Naive thymus-derived CD4-positive, alpha-beta T cell (primary cell): ENCODE measurements at regions of chr17 and their contacts with region 1.

Region 1: DNA sequence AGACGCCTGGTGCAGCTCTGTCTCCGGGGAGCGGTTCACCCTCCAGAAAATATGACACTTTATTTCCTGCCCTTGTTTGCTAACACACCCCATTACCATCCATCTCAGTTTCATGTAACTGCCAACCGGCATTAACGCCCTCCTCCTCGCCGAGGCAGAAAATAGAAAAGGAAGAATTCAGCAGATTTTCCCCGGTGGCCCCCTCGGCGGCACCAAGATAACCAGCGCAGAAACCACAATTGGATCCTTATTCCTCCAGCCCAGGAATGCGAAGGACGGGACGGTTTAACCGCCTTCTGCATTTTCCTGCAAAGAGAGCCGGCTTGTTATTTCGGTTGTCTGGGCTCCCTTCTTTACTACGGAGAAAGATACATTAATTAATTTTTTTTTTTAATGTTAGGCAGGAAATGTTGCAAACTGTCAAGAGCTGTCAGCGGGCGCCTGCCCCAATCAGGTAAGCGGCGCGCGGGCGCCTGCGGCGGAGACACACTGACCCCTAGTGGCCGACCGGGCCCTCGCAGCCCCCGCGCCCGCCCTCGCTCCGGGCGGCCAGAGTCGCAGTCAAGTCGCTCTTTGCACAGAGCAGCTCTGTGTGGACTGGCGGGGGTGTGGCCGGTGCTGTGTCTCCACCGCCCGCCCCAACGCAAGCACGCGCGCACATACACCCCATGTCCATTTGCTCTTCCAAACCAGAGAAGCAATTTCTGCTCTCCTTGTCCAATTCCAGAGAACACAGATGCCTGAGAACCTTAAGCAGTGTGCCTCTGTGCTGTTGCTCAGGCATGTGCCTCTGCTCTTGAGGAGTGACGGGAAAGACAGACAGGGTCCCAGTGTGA is 53.6 kb downstream of the C17orf67 start:
- DNase-seq: peak; percentile 81 to 92 (median 88)
- ATAC-seq: peak; percentile 99
- H3K4me3 ChIP-seq: peak overlapping the region; percentile 62
- H3K4me3 Mint-ChIP-seq: peak overlapping the region; percentile 87 to 99 (median 92)
- H3K27ac ChIP-seq: peak overlapping the region; percentile 82
- H3K27ac Mint-ChIP-seq: peak overlapping the region; percentile 92 to 100 (median 96)
- H3K4me1 ChIP-seq: peaks cover 0 to 18% of the 10 kb centered on the region in 2 donors
- H3K4me1 Mint-ChIP-seq: peaks cover 19 to 37% (median 31%) of the 10 kb centered on the region in 7 donors
- H3K27me3 ChIP-seq: no peaks in the 10 kb centered on the region
- H3K27me3 Mint-ChIP-seq: peaks cover 0 to 5% (median 0%) of the 10 kb centered on the region in 5 donors

Region 2: GRCh38 chr17:56125830-56126819 is 654.0 kb before region 1 on chr17:
- CTCF ChIA-PET with region 1: interaction called, 5 read pairs
- POLR2A ChIA-PET with region 1: no interaction called
- intact Hi-C with region 1: loop called (anchors 2 to 5 kb)
- DNase-seq: peak in 3 of 9 donors; percentile 6 to 19 (median 7)
- ATAC-seq: no peak
- H3K4me3 ChIP-seq: no peak overlapping the region
- H3K4me3 Mint-ChIP-seq: no peak overlapping the region
- H3K27ac ChIP-seq: no peak overlapping the region
- H3K27ac Mint-ChIP-seq: no peak overlapping the region
- H3K4me1 ChIP-seq: no peaks in the 10 kb centered on the region
- H3K4me1 Mint-ChIP-seq: peaks cover 0 to 1% (median 0%) of the 10 kb centered on the region in 7 donors
- H3K27me3 ChIP-seq: no peaks in the 10 kb centered on the region
- H3K27me3 Mint-ChIP-seq: peaks cover 4 to 7% (median 6%) of the 10 kb centered on the region in 5 donors

Region 3: GRCh38 chr17:56598466-56599148 is 181.5 kb before region 1 on chr17:
- CTCF ChIA-PET with region 1: interaction called, 8 read pairs
- POLR2A ChIA-PET with region 1: interaction called, 27 read pairs
- intact Hi-C with region 1: no loop called
- DNase-seq: no peak
- ATAC-seq: peak; percentile 23
- H3K4me3 ChIP-seq: no peak overlapping the region
- H3K4me3 Mint-ChIP-seq: peak overlapping the region; percentile 30 to 96 (median 84)
- H3K27ac ChIP-seq: peak overlapping the region; percentile 88
- H3K27ac Mint-ChIP-seq: peak overlapping the region in 8 of 9 donors; percentile 98 to 100 (median 99)
- H3K4me1 ChIP-seq: peaks cover 8 to 58% of the 10 kb centered on the region in 2 donors
- H3K4me1 Mint-ChIP-seq: peaks cover 34 to 70% (median 62%) of the 10 kb centered on the region in 7 donors
- H3K27me3 ChIP-seq: peaks cover 0 to 8% of the 10 kb centered on the region in 2 donors
- H3K27me3 Mint-ChIP-seq: peaks cover 0 to 41% (median 9%) of the 10 kb centered on the region in 5 donors

Region 4: DNA sequence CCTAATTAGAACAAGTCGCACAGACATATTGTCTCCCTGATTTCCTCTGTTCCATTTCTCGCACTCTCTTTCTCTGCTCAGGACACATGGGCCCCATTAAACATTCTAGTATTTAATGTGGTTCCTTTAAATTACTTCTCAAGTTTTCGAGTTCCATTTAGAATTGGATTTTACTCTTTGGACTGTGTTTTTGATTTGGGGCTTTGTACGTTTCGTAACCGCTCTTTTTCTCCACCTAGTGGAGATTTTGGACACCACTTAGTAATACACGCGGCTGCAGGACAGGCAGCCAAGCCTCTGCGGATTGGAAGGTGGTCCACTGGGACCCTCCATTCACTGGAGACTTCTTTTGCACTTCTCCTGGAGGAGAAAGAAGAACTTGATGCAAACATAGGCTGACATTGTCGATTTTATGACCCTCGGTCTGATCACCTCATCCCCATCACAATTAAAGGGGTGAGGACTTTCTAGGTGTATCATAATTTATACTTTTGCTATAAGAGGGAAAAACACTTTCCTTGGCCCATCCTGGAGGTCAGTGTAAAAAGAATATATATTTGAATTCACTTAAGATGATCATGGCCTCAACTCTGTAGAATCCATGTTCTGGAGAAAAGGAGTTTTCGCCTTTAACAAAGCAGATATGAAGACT is 100.9 kb before region 1 on chr17:
- CTCF ChIA-PET with region 1: interaction called, 5 read pairs
- POLR2A ChIA-PET with region 1: interaction called, 5 read pairs
- intact Hi-C with region 1: loop called (anchors 1 kb)
- DNase-seq: peak in 5 of 9 donors; percentile 30 to 47 (median 40)
- ATAC-seq: peak; percentile 65
- H3K4me3 ChIP-seq: peak overlapping the region; percentile 40
- H3K4me3 Mint-ChIP-seq: peak overlapping the region in 9 of 10 donors; percentile 77 to 91 (median 86)
- H3K27ac ChIP-seq: no peak overlapping the region
- H3K27ac Mint-ChIP-seq: peak overlapping the region in 2 of 9 donors; percentile 9 to 10
- H3K4me1 ChIP-seq: peaks cover 19 to 20% of the 10 kb centered on the region in 2 donors
- H3K4me1 Mint-ChIP-seq: peaks cover 7 to 23% (median 17%) of the 10 kb centered on the region in 7 donors
- H3K27me3 ChIP-seq: no peaks in the 10 kb centered on the region
- H3K27me3 Mint-ChIP-seq: peaks cover 12 to 52% (median 31%) of the 10 kb centered on the region in 5 donors

Region 5: GRCh38 chr17:56707312-56708219 is 72.5 kb before region 1 on chr17:
- CTCF ChIA-PET with region 1: no interaction called
- POLR2A ChIA-PET with region 1: no interaction called
- intact Hi-C with region 1: no loop called
- DNase-seq: no peak
- ATAC-seq: no peak
- H3K4me3 ChIP-seq: no peak overlapping the region
- H3K4me3 Mint-ChIP-seq: no peak overlapping the region
- H3K27ac ChIP-seq: no peak overlapping the region
- H3K27ac Mint-ChIP-seq: no peak overlapping the region
- H3K4me1 ChIP-seq: no peaks in the 10 kb centered on the region
- H3K4me1 Mint-ChIP-seq: no peaks in the 10 kb centered on the region
- H3K27me3 ChIP-seq: no peaks in the 10 kb centered on the region
- H3K27me3 Mint-ChIP-seq: peaks cover 0 to 18% (median 5%) of the 10 kb centered on the region in 5 donors

Region 6: DNA sequence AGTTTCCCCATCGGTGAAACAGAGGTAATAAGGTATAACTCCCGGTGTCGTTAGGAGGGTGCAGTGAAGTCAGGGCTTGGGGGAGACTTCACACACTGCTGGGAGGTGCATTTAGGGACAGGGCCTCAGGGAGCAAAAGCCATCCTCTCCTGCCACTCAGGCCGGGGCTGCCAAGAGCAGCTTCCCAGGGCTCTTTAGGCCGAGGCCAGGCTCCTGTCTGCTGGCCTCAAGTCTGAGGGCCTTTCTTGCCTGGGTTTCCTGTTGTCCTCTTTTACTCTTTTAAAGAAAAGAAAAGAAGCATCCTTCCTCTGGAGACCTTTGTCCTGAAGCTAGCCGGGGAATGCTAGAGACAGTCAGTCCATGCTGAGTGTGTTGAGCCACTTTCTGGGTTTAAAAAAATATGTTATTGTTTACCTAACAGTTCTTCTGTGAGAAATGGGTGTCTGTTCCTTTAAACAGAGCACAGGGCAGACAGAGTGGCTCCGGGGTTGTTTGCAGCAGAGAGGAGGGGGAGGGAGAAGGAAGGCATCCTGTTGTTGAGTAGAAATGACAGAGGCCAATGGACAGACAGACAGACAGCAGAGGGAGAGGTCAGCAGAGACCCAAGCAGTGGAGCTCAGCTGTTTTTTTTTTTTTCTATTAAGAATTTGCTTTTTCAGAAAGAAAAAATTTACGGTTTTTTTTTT is 25.4 kb before region 1 on chr17:
- CTCF ChIA-PET with region 1: interaction called, 6 read pairs
- POLR2A ChIA-PET with region 1: interaction called, 4 read pairs
- intact Hi-C with region 1: loop called (anchors 1 to 2 kb)
- DNase-seq: peak in 4 of 9 donors; percentile 5 to 27 (median 20)
- ATAC-seq: no peak
- H3K4me3 ChIP-seq: no peak overlapping the region
- H3K4me3 Mint-ChIP-seq: peak overlapping the region in 9 of 10 donors; percentile 35 to 81 (median 56)
- H3K27ac ChIP-seq: no peak overlapping the region
- H3K27ac Mint-ChIP-seq: peak overlapping the region; percentile 17 to 91 (median 63)
- H3K4me1 ChIP-seq: peaks cover 0 to 28% of the 10 kb centered on the region in 2 donors
- H3K4me1 Mint-ChIP-seq: peaks cover 20 to 61% (median 54%) of the 10 kb centered on the region in 7 donors
- H3K27me3 ChIP-seq: no peaks in the 10 kb centered on the region
- H3K27me3 Mint-ChIP-seq: no peaks in the 10 kb centered on the region

Region 7: DNA sequence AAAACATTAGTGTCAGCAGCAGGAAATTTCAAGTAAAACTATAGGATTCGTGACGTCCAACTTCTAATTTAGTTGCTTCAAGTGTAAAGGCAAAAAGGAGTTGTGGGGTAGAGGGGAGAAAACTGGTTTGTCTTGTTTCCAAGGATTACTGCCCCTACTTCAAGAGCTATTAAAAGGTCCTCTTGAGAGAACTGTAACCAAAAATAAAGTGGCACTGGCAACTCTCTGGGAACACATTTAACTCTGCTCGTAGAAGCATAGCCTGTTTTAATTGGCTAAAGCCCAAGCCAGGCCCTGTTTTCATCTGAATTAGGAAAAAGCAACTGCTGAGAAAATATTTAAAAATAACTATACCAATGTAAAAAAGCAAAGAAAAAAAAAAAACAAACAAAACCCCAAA is 253.2 kb after region 1 on chr17:
- CTCF ChIA-PET with region 1: no interaction called
- POLR2A ChIA-PET with region 1: no interaction called
- intact Hi-C with region 1: no loop called
- DNase-seq: no peak
- ATAC-seq: no peak
- H3K4me3 ChIP-seq: no peak overlapping the region
- H3K4me3 Mint-ChIP-seq: no peak overlapping the region
- H3K27ac ChIP-seq: no peak overlapping the region
- H3K27ac Mint-ChIP-seq: no peak overlapping the region
- H3K4me1 ChIP-seq: no peaks in the 10 kb centered on the region
- H3K4me1 Mint-ChIP-seq: no peaks in the 10 kb centered on the region
- H3K27me3 ChIP-seq: no peaks in the 10 kb centered on the region
- H3K27me3 Mint-ChIP-seq: peaks cover 18 to 42% (median 24%) of the 10 kb centered on the region in 5 donors